HepG2 (cell line): ENCODE measurements at regions of chr9 and their contacts with region 1.

Region 1: GRCh38 chr9:94726495-94727191 is at the start of gene AOPEP:
- DNase-seq: peak; percentile 90
- ATAC-seq: peak; percentile 97
- H3K4me3 ChIP-seq: peak within 1 kb of the TSS; percentile 90 to 91 (median 91)
- H3K27ac ChIP-seq: peak within 1 kb of the TSS; percentile 69
- H3K4me1 ChIP-seq: peaks cover 47% of the 10 kb centered on the region
- H3K27me3 ChIP-seq: no peaks in the 10 kb centered on the region; a peak in 1 of 5 replicates
- CTCF ChIP-seq: peak; percentile 34
- EP300 ChIP-seq: peak; percentile 12 to 47; a peak in 1 of 4 replicates
- POLR2A ChIP-seq: peak; percentile 71 to 92
- RAD21 ChIP-seq: no peak
- total RNA-seq, gene AOPEP: 32.8 and 41.6 TPM in 2 replicates

Region 2: DNA sequence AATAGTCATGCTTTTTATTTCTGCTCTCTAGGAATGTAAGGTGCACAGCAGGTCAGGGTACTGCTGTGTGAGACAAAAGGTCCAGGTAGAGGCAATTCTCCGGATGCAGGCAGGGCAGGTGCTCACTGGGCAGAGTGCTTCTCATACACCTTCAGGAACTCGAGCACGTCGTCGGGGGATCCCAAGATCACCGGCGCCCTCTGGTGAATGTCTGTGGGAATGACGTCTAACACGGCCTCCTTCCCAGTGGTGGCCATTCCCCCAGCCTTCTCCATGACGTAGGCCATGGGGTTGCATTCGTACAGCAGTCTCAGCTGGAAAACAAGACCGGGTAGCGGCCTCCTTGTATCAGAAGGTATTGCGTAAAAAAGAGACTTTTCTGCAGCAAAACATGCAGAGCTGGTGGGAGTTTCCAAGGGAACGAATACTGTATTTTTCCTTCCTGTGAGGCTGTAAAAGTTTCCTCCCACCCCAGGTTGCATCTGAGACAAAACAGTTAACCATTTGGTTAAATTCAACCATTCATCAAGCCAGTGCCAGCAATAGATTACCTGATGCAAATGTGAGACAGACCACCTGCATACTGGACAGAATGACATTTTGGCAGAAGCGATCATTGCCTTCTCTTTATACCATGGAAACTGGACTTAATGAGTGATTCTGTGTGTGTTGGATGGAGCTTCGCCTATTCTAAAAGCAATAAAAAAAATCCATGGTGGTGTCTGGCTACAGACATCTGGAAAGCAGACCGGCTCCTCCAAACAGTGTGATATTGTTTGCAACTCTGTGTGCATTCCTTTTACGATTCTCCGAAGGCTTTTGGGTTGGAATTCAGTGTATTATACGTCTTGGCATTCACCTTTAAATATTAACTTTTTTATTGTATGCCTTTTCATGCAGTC is 123.1 kb before region 1 on chr9:
- CTCF ChIA-PET with region 1: no interaction called
- POLR2A ChIA-PET with region 1: no interaction called
- in situ Hi-C with region 1: no loop called
- intact Hi-C with region 1: loop called (anchors 1 kb)
- DNase-seq: peak; percentile 62
- ATAC-seq: peak; percentile 57
- H3K4me3 ChIP-seq: peak overlapping the region in 2 of 3 experiments; percentile 15 to 55; a peak in 3 of 6 replicates
- H3K27ac ChIP-seq: no peak overlapping the region
- H3K4me1 ChIP-seq: peaks cover 78% of the 10 kb centered on the region
- H3K27me3 ChIP-seq: no peaks in the 10 kb centered on the region
- CTCF ChIP-seq: peak; percentile 92
- EP300 ChIP-seq: no peak
- POLR2A ChIP-seq: no peak
- RAD21 ChIP-seq: peak; percentile 73; the same call in 1 of the 2 replicates

Region 3: DNA sequence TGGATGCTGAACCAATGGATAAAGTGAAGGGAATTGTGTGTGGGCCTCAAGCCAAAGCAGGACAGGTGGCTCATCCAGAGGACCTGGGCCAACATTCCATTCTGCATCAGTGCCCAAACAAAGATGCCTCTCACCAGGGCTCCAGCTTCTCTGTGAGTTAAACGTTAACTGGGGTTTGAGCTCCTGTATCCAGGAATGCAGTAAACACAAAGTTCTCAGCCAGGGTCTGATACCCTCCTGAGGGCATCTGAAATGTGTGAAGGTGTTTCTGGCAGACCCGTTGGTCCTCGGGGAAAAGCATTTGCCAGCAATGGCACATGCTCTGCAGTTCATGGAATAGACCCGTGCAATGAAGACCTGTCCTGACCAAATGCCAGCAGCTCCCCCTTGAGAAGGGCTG is 34.0 kb before region 1 on chr9:
- CTCF ChIA-PET with region 1: no interaction called
- POLR2A ChIA-PET with region 1: interaction called, 7 read pairs
- in situ Hi-C with region 1: no loop called
- intact Hi-C with region 1: loop called (anchors 5 kb)
- DNase-seq: peak; percentile 92
- ATAC-seq: peak; percentile 98
- H3K4me3 ChIP-seq: 0 out of 6 replicates have a peak overlapping the region, but pooled peaks of 1 of the 3 experiments have one; percentile 18
- H3K27ac ChIP-seq: peak overlapping the region; percentile 41
- H3K4me1 ChIP-seq: peaks cover 48% of the 10 kb centered on the region
- H3K27me3 ChIP-seq: no peaks in the 10 kb centered on the region
- CTCF ChIP-seq: no peak; the same call in 1 of the 2 replicates
- EP300 ChIP-seq: no peak
- POLR2A ChIP-seq: no peak
- RAD21 ChIP-seq: no peak

Region 4: GRCh38 chr9:94853887-94854286 is 127.2 kb after region 1 on chr9:
- CTCF ChIA-PET with region 1: no interaction called
- POLR2A ChIA-PET with region 1: no interaction called
- in situ Hi-C with region 1: no loop called
- intact Hi-C with region 1: loop called (anchors 10 kb)
- DNase-seq: peak; percentile 94
- ATAC-seq: peak; percentile 88
- H3K4me3 ChIP-seq: no peak overlapping the region
- H3K27ac ChIP-seq: peak overlapping the region; percentile 83
- H3K4me1 ChIP-seq: peaks cover 39% of the 10 kb centered on the region
- H3K27me3 ChIP-seq: no peaks in the 10 kb centered on the region
- CTCF ChIP-seq: no peak
- EP300 ChIP-seq: peak in 1 of 2 experiments; percentile 74; a peak in 2 of 4 replicates
- POLR2A ChIP-seq: peak; percentile 33 to 46; a peak in 1 of 4 replicates
- RAD21 ChIP-seq: no peak

Region 5: DNA sequence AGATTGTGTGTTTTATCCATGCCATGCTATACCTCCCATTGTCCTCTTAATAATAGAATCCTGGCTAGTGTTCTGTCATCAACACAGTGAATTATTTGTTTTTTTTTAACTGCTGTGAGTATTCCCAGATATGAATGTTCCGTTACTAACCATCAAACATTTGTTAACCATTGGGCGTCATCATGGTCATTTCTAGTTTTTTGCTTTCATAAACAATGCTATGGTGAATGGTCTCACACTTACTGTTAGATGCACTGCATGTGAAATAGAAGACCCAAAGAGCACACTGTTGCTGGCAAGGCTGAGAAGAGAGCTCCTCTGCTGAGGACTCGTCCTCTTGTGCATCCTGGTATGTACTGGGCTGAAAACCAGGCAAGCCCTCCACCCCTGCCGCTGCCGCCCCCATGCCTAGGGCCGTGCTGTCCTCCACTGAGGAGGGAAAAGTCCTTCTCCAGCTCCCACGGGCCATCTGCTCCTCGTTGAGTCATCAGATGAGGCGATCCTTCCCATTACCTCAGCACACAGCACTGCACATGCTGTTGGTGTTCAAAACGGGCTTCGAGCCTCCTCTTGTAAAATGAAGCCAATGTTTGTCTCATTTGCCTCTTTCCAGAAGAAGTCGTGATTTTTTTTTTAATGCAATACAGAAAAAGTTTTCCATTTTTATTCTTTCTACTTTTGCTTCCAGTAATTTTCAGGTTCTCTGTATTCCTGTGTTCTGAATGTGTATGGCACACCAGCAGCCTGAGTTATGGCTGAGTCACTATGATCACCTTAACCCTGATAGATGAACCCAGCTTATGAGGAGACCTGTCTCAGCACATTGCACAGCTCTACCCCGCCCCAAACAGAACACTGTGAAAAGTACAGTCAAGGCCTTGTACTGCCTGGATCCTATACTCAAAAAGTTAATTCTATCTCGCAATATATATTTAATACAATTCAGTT is 218.8 kb after region 1 on chr9:
- CTCF ChIA-PET with region 1: no interaction called
- POLR2A ChIA-PET with region 1: no interaction called
- in situ Hi-C with region 1: no loop called
- intact Hi-C with region 1: no loop called
- DNase-seq: no peak
- ATAC-seq: no peak
- H3K4me3 ChIP-seq: no peak overlapping the region
- H3K27ac ChIP-seq: no peak overlapping the region
- H3K4me1 ChIP-seq: peaks cover 59% of the 10 kb centered on the region
- H3K27me3 ChIP-seq: no peaks in the 10 kb centered on the region
- CTCF ChIP-seq: no peak
- EP300 ChIP-seq: no peak
- POLR2A ChIP-seq: no peak
- RAD21 ChIP-seq: no peak

Region 6: GRCh38 chr9:95031711-95032461 is 305.2 kb after region 1 on chr9:
- CTCF ChIA-PET with region 1: no interaction called
- POLR2A ChIA-PET with region 1: no interaction called
- in situ Hi-C with region 1: no loop called
- intact Hi-C with region 1: no loop called
- DNase-seq: peak; percentile 98
- ATAC-seq: peak; percentile 82
- H3K4me3 ChIP-seq: peak overlapping the region in 1 of 3 experiments; percentile 48; a peak in 2 of 6 replicates
- H3K27ac ChIP-seq: peak overlapping the region; percentile 85
- H3K4me1 ChIP-seq: peaks cover 76% of the 10 kb centered on the region
- H3K27me3 ChIP-seq: no peaks in the 10 kb centered on the region
- CTCF ChIP-seq: no peak
- EP300 ChIP-seq: peak in 1 of 2 experiments; percentile 97; a peak in 3 of 4 replicates
- POLR2A ChIP-seq: peak; percentile 16 to 21; a peak in 2 of 4 replicates
- RAD21 ChIP-seq: no peak